ENCODE measurements at regions of chr11 and their contacts with region 1.

Region 1: GRCh38 chr11:102346748-102347461 is at the start of gene BIRC2:
- DNase-seq: peak; percentile 91 to 97
- H3K4me3 ChIP-seq: peak within 1 kb of the TSS; percentile 74 to 88
- H3K27ac ChIP-seq: peak within 1 kb of the TSS; percentile 99 to 100
- H3K4me1 ChIP-seq: no peaks in the 10 kb centered on the region
- H3K27me3 ChIP-seq: no peaks in the 10 kb centered on the region
- CTCF ChIP-seq: peak; percentile 62 to 97 (median 88)
- POLR2A ChIP-seq: peak; percentile 90 to 96
- total RNA-seq, gene BIRC2: 40.1 to 106 (median 53.5) TPM

Region 2: GRCh38 chr11:102495161-102496042 is 148.5 kb after region 1 on chr11:
- intact Hi-C with region 1: loop called (anchors 5 kb)
- DNase-seq: peak; percentile 37 to 59
- H3K4me3 ChIP-seq: no peak overlapping the region
- H3K27ac ChIP-seq: peak overlapping the region; percentile 36 to 87
- H3K4me1 ChIP-seq: peaks cover 0 to 6% of the 10 kb centered on the region in 2 donors
- H3K27me3 ChIP-seq: no peaks in the 10 kb centered on the region
- CTCF ChIP-seq: peak; percentile 67 to 83 (median 77)
- POLR2A ChIP-seq: no peak

Region 3: DNA sequence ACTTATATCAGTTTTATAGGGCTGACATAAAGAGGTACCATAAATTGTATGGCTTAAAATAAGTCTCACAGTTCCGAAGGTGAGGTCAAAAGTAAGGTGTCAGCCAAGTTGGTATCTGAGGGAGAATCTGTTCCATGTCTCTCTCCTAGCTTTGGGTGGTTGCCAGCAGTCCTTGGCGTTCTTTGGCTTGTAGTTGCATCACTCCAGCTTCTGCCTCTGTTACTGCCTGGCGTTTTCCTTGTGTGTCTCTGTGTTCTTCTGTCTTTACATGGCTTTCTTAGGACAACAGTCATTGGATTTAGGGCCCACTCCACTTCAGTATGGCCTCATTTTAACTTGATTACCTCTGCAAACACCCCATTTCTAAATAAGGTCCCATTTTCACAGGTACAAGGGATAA is 167.0 kb after region 1 on chr11:
- intact Hi-C with region 1: no loop called
- DNase-seq: peak; percentile 56 to 80
- H3K4me3 ChIP-seq: no peak overlapping the region
- H3K27ac ChIP-seq: peak overlapping the region; percentile 43 to 73
- H3K4me1 ChIP-seq: no peaks in the 10 kb centered on the region
- H3K27me3 ChIP-seq: no peaks in the 10 kb centered on the region
- CTCF ChIP-seq: no peak
- POLR2A ChIP-seq: no peak